CD8-positive, alpha-beta T cell (primary cell): ENCODE measurements at regions of chr15 and their contacts with region 1.

Region 1: DNA sequence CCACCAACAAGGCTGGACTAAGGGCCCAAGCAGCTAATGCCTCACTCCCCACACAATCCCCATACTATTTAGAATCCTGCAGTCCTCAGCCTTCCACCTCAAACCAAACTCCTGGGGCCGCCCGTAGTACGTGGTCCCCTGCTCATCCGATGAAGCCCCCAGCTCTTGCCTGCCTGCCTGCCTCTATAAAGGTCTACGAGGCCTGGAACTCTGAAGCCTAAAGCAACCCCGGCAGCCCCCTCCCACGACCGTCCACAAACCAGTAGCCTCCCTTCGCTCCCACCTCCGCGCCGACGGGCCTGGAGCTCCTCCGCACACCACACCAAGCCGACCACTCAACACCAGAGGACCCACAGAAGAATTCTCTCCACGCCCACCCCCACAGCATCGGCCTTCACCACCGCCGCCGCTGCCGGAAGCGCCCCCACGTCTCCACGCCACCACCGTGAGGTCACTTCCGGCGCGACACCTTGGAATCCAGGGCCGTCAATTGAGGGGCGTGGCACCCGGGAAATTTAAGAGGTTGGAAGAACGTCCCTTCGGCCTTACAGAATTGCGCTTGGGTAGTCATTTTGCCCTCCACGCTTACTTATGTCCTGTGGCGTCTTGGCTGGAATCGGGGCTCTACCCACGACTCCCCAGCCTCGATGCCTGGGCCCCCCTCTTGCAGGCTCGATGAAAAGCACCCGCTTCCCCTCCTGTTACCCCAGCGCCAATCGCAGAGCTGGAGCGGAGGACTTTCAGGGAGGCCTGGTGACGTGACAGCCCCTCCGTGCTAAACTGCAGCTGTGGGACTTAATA is at the start of gene EDC3:
- DNase-seq: peak; percentile 72 to 94 (median 89)
- ATAC-seq: peak; percentile 88
- H3K4me3 ChIP-seq: peak within 1 kb of the TSS; percentile 79 to 93
- H3K4me3 Mint-ChIP-seq: peak within 1 kb of the TSS; percentile 100
- H3K27ac ChIP-seq: peak within 1 kb of the TSS; percentile 80 to 83
- H3K27ac Mint-ChIP-seq: peak within 1 kb of the TSS; percentile 99
- H3K4me1 ChIP-seq: peaks cover 14% of the 10 kb centered on the region
- H3K4me1 Mint-ChIP-seq: peaks cover 47% of the 10 kb centered on the region
- H3K27me3 ChIP-seq: peaks cover 0 to 1% of the 10 kb centered on the region in 2 experiments
- H3K27me3 Mint-ChIP-seq: no peaks in the 10 kb centered on the region
- CTCF ChIP-seq: no peak
- total RNA-seq, gene EDC3: 9.8 to 11.8 TPM

Region 2: DNA sequence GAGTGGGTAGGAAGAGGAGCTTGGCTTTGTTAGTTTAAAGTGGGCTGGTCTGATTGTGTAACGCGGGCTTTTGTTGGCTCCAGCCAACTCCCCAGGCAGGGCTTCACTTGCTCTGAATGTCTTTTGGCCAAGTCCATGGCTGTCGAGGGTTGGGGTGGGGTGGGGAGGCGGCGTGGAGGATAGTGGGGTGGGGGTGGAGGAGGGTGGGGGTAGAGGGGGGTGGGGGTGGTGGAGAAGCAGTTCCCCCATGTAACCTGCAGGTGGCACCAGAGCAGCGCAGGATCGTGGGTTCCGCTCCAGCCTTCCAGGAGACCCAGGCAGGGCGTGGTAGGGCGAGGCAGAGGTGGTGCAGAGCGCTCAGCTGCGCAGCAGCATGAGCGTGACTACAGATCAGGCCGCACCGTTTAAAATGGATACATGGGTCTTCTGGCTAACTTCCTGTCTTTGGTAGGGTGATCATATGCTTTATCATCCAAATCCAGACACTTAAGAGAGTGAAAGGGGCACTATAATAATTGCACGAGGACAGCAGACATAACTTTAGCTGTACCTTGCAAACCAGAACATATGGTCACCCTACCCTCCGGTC is 641.8 kb before region 1 on chr15:
- CTCF ChIA-PET with region 1: no interaction called
- POLR2A ChIA-PET with region 1: no interaction called
- intact Hi-C with region 1: no loop called
- DNase-seq: peak; percentile 26 to 80 (median 70)
- ATAC-seq: peak; percentile 100
- H3K4me3 ChIP-seq: no peak overlapping the region
- H3K4me3 Mint-ChIP-seq: no peak overlapping the region
- H3K27ac ChIP-seq: no peak overlapping the region
- H3K27ac Mint-ChIP-seq: no peak overlapping the region
- H3K4me1 ChIP-seq: peaks cover 7% of the 10 kb centered on the region
- H3K4me1 Mint-ChIP-seq: peaks cover 21% of the 10 kb centered on the region
- H3K27me3 ChIP-seq: no peaks in the 10 kb centered on the region
- H3K27me3 Mint-ChIP-seq: no peaks in the 10 kb centered on the region
- CTCF ChIP-seq: no peak

Region 3: GRCh38 chr15:74723754-74724334 is 28.0 kb after region 1 on chr15:
- CTCF ChIA-PET with region 1: no interaction called
- POLR2A ChIA-PET with region 1: no interaction called
- intact Hi-C with region 1: loop called in 1 of 2 experiments (anchors 1 kb)
- DNase-seq: peak in 2 of 9 experiments; percentile 34 to 51
- ATAC-seq: peak; percentile 45
- H3K4me3 ChIP-seq: no peak overlapping the region
- H3K4me3 Mint-ChIP-seq: no peak overlapping the region
- H3K27ac ChIP-seq: no peak overlapping the region
- H3K27ac Mint-ChIP-seq: no peak overlapping the region
- H3K4me1 ChIP-seq: peaks cover 7% of the 10 kb centered on the region
- H3K4me1 Mint-ChIP-seq: peaks cover 9% of the 10 kb centered on the region
- H3K27me3 ChIP-seq: peaks cover 0 to 3% of the 10 kb centered on the region in 2 experiments
- H3K27me3 Mint-ChIP-seq: peaks cover 12% of the 10 kb centered on the region
- CTCF ChIP-seq: no peak